ENCODE measurements at regions of chr11 and their contacts with region 1.

Region 1: DNA sequence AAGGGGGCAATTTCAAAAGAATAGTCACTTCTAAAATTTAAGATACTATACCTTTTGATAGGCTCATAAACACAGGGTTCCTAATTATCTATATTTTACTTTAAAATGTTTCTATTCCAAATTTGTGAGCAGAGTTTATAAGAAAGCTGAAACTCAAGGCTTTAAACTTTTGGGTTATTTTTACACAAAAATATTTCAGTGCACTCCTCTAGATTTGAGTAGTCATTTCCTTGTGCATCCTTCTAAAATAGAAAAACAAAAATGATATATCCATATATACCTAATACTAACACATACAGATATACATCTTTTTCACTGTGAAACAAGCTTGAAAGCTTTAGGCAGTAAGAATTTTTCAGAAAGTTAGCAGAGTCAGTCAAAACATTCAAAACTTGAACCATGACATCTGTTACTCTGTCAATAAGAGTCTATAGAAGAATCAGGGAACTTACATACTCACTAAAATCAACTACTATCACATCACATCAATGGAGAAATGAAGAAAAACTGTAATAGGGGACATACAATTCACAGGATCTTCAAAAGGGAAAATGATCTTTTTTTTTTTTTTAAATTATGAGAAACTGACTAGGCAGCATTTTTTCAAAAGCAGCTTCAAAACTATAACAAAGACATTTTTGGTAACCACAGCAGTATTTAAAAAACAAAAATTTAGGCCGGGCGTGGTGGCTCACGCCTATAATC is 5.1 kb downstream of the PHF21A start:
- DNase-seq: no peak
- H3K4me3 Mint-ChIP-seq: peak overlapping the region; percentile 57
- H3K27ac Mint-ChIP-seq: peak overlapping the region; percentile 77
- H3K4me1 Mint-ChIP-seq: peaks cover 59% of the 10 kb centered on the region
- H3K27me3 Mint-ChIP-seq: no peaks in the 10 kb centered on the region

Region 2: DNA sequence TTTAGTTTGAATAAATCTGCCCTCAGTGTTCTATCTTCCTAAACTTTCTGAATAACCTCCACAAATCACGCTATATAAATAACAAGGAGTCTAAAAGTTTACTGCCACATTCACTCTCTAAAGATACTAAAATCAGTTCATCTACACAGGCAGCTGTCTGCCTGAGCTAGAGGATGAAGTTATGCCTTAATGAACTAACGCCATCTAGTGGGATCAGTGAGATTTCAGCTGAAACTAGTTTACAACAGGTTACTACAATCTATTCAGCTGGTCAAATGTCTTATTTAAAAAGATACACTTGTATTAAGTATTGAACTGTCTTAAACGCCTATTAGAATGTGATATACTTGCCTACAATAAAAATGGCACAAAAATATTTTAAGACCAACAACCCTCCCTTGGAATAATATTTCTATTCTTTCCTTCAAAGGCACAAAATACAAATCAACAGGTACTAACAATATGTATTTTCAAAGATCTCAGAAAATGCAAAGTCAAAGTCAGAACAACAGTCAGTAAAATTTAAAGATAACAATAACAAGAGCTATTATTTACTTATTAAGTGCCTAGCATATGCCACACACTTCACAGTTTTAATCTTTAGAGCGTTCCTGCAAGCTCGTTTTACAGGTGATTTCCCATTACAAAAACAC is 109.6 kb before region 1 on chr11:
- CTCF ChIA-PET with region 1: no interaction called
- POLR2A ChIA-PET with region 1: no interaction called
- DNase-seq: no peak
- H3K4me3 Mint-ChIP-seq: no peak overlapping the region
- H3K27ac Mint-ChIP-seq: no peak overlapping the region
- H3K4me1 Mint-ChIP-seq: peaks cover 2% of the 10 kb centered on the region
- H3K27me3 Mint-ChIP-seq: no peaks in the 10 kb centered on the region

Region 3: DNA sequence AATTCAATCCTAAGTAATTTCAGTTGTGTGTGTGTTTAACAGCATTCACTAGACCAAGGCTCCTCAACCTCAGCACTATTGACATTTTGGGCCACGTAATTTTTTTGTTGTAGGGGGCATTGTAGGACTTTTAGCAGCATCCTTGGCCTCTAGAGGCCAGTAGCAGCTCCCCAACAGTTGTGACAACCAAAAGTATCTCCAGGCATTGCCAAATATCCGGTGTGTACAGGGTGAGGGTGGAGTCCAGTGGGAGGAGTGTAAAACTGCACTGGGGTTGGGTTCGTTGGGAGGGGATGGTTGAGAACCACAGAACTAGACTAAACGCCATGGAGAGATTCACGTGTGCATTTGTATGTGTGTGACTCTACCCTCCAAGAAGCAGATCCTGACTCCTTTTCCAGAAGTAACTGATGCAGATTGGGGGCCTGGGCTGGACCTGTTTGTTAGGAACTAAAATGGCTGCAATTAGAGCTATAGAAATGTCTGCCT is 11.0 kb after region 1 on chr11:
- CTCF ChIA-PET with region 1: interaction called, 5 read pairs
- POLR2A ChIA-PET with region 1: interaction called, 13 read pairs
- DNase-seq: peak; percentile 79
- H3K4me3 Mint-ChIP-seq: no peak overlapping the region
- H3K27ac Mint-ChIP-seq: peak overlapping the region; percentile 72
- H3K4me1 Mint-ChIP-seq: peaks cover 24% of the 10 kb centered on the region
- H3K27me3 Mint-ChIP-seq: peaks cover 4% of the 10 kb centered on the region